GM18951 (cell line): ENCODE measurements at regions of chr20 and their contacts with region 1.

Region 1: DNA sequence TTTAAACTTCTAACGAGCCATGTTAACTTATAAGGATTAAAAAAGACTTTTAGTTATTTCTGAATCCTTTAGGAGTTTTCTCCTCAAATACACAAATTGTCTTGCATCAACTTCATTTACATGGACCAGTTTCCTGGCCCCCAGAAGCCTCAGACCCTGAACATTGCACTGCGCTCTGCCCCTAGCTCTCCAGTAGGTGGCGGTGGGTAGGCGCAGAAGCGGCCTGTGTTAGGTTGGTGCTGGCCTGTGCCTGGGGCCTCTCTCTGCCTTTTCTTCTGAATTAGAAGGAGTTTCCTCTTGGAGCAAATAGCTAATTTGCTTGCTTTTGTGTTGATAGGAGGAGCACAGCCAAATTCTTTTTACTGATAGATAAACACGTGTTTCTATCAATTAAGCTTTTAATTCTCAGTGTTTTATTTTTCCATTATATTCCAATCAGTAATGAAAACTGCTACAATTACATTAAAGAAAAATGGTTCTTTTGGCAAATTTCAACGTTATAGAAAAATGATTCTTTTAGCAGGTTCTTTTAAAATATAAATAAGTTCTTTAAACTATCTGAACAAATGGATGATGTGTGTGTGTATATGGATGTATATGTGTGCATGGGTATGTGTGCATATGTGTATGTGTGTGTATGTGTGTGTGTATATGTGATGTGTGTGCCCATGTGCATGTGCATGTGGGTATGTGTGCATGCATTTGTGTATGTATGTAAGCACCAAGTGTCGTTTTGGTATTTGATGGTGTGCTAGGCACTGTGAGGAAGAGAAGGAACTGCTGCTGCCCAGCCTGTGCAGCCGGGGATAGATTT is 44.5 kb downstream of the DTD1 start:
- POLR2A ChIP-seq: no peak

Region 2: GRCh38 chr20:17873410-17874270 is 758.8 kb before region 1 on chr20:
- in situ Hi-C with region 1: no loop called
- POLR2A ChIP-seq: no peak

Region 3: GRCh38 chr20:18048176-18048575 is 584.2 kb before region 1 on chr20:
- in situ Hi-C with region 1: no loop called
- POLR2A ChIP-seq: no peak

Region 4: GRCh38 chr20:18224968-18225568 is 407.3 kb before region 1 on chr20:
- in situ Hi-C with region 1: no loop called
- POLR2A ChIP-seq: no peak

Region 5: GRCh38 chr20:18496740-18497592 is 135.4 kb before region 1 on chr20 and contains the start of gene RBBP9:
- in situ Hi-C with region 1: no loop called
- POLR2A ChIP-seq: peak; percentile 68

Region 6: DNA sequence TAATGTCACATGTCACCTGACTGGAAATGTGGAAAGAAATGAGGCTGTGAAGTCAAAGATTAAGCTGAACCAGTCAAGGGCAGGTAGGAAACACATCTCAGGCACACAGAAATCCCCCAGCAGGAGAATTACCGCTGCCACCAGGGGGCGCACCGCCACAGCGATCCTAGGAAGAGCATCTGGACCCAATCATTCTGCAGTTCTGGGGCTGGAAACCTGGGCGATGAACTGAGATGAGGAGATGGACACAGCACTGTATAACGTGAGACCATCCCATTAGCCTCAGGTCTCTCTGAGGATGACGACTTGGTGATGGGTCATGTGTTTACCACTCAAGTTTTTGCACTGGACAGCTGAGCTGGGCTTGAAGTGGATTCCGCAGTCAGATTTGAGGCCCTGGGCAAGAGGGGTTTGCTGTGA is 573.6 kb after region 1 on chr20:
- in situ Hi-C with region 1: loop called (anchors 25 kb)
- POLR2A ChIP-seq: no peak

Region 7: GRCh38 chr20:19661717-19662636 is 1029.6 kb after region 1 on chr20:
- in situ Hi-C with region 1: loop called (anchors 25 kb)
- POLR2A ChIP-seq: no peak